ENCODE measurements at regions of chr18 and their contacts with region 1.

Region 1: GRCh38 chr18:7358989-7359726 is 128.3 kb downstream of the LRRC30 start:
- DNase-seq: no peak
- H3K4me3 ChIP-seq: no peak overlapping the region
- H3K27ac ChIP-seq: no peak overlapping the region
- H3K4me1 ChIP-seq: no peaks in the 10 kb centered on the region
- H3K27me3 ChIP-seq: no peaks in the 10 kb centered on the region
- CTCF ChIP-seq: no peak
- POLR2A ChIP-seq: no peak

Region 2: DNA sequence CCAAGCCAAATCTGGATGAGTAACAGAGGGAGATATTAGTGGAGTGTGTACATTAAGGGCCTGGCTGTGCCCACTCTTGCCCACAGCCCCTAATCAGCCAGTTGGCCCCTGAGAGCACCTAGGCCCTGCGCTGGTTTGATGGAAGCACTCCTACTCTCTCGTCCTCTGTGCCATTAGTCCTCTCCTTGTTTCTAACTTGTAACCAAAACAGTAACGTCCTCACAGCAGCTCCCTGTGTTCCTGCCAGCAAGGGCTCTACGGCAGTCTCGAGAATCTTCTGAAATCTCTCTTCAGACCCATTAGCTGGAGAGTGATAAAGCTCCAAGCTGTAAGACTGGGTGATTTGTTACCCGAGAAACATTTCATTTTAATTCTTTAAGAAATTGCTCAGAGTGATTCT is 52.1 kb before region 1 on chr18:
- intact Hi-C with region 1: loop called (anchors 1 kb)
- DNase-seq: no peak
- H3K4me3 ChIP-seq: no peak overlapping the region
- H3K27ac ChIP-seq: no peak overlapping the region
- H3K4me1 ChIP-seq: no peaks in the 10 kb centered on the region
- H3K27me3 ChIP-seq: no peaks in the 10 kb centered on the region
- CTCF ChIP-seq: no peak
- POLR2A ChIP-seq: no peak

Measured in breast epithelium (tissue), 4 donors.